GM10248 (cell line): ENCODE measurements at regions of chr1 and their contacts with region 1.

Region 1: DNA sequence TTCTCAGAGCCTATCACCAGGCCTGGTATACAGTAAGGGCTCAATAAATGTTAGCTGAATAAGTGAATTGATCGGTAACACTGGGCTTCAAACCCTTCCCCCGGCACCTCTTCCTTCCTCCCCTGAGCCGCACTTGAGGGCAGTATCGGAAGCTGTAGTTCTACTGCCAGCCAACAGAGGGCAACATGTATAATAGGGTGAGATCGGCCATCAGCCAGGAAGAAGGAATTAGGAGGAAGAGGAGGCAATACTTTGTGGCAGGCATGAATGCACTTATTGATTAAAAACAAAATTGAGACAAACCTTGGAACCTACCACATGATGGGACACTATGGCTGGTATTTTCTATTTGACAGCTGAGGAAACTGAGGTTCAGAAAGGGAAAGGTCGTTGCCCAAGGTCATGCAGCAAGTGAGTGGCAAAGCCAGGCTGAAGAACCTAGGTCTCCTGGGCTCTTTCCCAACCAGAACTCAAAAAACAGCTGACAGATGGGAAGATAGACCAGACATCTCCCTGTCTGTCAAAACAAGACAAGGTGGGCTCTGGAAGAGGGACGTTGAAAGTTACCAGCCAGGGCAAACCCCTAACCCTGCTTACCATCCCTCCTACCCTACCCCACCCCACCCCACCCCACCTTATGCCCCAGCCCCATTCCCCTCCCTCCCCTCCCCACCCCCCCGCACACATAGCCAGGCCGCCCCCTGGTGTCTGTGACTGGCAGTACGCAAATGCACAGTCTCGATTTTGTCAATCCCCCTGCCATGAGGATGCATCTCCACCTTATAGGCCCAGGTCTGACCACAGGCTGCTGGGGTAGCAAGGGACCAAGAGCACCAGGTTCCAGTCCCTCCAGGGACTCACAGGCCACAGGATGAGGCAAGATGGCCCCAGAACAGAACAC is 107.3 kb upstream of the RUNX3 start:
- DNase-seq: peak; percentile 77
- CTCF ChIP-seq: peak; percentile 86

Region 2: GRCh38 chr1:24847995-24848881 is 189.2 kb before region 1 on chr1:
- CTCF ChIA-PET with region 1: interaction called, 16 read pairs
- POLR2A ChIA-PET with region 1: no interaction called
- DNase-seq: peak; percentile 89
- CTCF ChIP-seq: peak; percentile 96

Region 3: GRCh38 chr1:24935615-24936484 is 101.6 kb before region 1 on chr1:
- CTCF ChIA-PET with region 1: interaction called, 45 read pairs
- POLR2A ChIA-PET with region 1: no interaction called
- DNase-seq: peak; percentile 71
- CTCF ChIP-seq: no peak

Region 4: DNA sequence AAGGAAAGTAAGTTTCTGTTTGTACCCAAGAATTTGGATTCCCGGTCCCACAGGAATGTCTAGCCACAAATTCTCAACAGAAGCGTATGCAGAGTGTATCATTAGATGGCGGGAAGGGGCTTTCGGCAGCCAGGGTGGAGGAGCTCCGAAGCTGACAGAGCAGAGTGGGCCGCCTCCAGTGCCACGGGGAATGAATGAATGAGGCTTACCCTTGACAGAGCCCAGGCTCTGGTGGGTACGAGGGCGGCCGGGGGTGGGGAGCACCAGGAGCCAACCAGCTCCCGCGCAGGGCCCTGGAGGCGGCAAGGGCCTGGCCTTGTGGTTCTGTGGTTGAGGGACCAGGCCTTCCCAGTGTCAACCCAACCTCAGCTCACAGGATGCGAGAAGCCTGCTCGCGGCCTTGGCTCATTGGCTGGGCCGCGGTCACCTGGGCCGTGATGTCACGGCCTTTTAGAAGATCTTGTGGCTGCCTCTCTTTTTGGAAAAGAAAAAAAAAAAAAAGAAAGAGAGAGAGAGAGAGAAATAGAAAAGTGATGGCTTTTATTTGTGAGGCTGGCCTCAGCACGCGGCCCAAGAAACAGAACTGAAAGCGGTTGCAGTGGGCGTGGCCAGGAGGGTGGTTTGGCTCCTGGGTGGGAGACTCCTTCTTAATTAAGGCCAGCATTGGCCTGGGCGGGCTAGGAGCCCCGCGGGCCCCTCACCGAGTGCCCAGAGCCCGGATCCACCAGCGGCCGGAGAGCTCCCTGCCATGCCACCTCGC is 72.4 kb before region 1 on chr1:
- CTCF ChIA-PET with region 1: interaction called, 63 read pairs
- POLR2A ChIA-PET with region 1: interaction called, 8 read pairs
- DNase-seq: peak; percentile 92
- CTCF ChIP-seq: no peak

Region 5: GRCh38 chr1:25022361-25023189 is 14.8 kb before region 1 on chr1:
- CTCF ChIA-PET with region 1: interaction called, 74 read pairs
- POLR2A ChIA-PET with region 1: interaction called, 11 read pairs
- DNase-seq: peak; percentile 89
- CTCF ChIP-seq: no peak

Region 6: DNA sequence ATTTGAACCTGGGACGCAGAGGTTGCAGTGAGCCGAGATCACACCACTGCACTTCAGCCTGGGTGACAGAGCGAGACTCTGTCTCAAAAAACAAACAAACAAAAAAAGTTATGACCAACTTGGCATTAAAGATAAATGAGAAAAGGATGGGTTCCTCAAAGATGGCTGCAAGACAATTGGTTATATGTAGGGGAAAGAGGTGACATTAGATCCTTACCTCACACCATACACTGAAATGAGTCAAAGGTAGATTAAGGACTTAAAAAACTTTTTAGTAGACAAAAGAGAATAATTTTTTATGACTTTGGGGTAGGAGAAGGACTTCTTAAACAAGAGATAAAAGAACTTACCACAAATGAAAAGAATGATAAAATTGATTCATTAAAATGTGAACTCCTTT is 120.4 kb after region 1 on chr1:
- CTCF ChIA-PET with region 1: no interaction called
- POLR2A ChIA-PET with region 1: no interaction called
- DNase-seq: no peak
- CTCF ChIP-seq: no peak

Region 7: DNA sequence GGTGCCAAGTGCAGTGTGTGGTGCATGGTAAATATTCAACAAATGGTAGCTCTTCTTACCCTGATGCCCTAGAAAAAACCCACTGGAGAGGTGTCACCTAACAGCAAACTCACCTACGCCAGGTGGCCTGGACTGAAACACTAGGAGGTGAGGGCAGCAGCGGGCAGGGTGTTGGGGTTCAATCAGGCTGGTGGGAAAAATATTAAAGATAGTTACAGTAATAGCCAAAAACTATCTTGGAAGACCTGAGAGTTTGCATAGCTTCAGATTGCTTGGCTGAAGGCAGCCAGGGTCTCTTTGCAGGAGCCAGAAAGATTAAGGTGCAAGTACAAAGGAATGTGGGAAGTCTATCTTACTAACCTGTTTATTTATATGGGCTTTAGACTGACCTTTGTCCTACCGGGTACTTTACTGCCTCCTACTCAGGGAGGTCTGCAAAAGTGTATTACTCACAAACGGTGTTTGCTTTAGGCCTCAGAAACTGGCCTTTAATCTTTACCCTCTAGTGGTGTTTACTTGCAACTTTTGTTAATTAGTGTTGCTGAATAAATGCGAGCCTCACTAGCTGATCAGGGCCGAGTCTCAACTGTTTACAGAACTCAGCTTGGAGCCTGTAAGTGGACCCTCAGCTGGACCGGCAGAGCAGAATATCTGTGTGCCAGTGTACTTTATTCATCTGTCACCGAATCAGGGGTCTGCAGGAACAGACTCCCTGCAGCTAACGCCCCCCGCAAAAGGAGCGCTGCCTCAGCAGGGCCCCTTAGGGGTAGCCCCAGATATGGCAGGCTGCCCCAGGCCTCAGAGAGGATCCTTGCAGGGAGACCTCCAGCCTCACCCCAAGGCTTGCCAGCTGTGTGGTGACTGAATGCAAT is 131.0 kb after region 1 on chr1:
- CTCF ChIA-PET with region 1: no interaction called
- POLR2A ChIA-PET with region 1: no interaction called
- DNase-seq: no peak
- CTCF ChIP-seq: no peak

Region 8: DNA sequence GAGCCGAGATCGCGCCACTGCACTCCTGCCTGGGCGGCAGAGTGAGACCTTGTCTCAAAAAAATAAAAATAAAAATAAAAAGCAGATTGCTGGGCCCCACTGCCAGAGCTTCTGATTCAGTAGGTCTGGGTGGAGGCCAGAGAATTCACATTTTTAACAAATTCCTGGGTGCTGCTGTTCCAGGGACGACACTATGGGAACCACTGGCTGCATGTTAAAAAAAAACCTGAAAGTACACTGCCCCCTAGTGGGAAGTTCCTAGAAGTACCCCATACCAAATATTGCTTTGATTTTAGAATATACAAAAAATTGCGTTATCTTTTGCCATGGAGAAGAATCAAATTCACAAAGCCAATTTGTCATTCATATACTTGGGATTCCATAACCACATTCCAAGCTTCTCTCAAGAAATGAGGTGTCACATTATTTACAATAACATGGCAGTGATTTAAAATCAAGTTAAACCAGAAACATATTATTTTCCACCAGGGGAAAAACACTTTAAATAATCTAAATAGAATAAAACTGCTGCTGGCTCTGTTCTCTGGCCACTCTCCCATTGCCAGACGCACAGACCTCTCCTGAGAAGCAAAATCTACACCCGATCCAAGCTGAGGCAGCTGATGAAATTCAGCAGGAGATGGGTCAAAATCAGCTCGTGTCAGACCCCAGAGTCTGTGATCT is 167.5 kb after region 1 on chr1:
- CTCF ChIA-PET with region 1: interaction called, 16 read pairs
- POLR2A ChIA-PET with region 1: no interaction called
- DNase-seq: peak; percentile 65
- CTCF ChIP-seq: peak; percentile 42